Posterior vena cava (tissue), 2 donors: ENCODE measurements at regions of chr15 and their contacts with region 1.

Region 1: DNA sequence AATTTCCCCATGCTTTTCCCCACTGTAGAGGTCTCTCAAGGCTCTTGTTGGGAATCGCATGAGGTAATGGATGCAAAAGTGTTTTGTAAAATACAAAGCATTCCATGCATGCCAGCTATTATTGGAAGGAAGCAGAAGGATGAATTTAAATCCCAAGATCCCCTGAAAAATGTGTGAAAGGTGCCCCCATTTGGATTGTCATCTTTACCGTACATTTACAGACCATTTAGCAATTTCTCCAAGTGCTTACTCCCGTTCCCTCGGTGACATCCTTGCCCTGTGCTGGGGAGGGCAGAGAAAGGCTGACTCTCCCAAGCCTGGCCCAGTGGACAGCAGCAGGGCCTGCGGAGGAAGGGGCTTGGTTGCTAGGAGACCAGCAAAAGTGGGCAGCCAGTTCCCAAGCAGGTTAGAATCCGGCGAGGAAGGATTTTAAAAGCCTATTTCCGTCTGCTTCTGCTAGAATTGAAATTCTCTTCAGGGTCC is 31.1 kb upstream of the NEO1 start:
- DNase-seq: no peak

Region 2: GRCh38 chr15:73075160-73075859 is 54.1 kb after region 1 on chr15:
- intact Hi-C with region 1: loop called in 1 of 2 experiments (anchors 2 kb)
- DNase-seq: no peak

Region 3: GRCh38 chr15:73190189-73190601 is 169.0 kb after region 1 on chr15:
- intact Hi-C with region 1: loop called in 1 of 2 experiments (anchors 2 kb)
- DNase-seq: no peak